ENCODE measurements at regions of chr1 and their contacts with region 1.

Region 1: GRCh38 chr1:204746838-204747442 is 61.4 kb upstream of the LRRN2 start:
- DNase-seq: peak; percentile 56
- ATAC-seq: peak; percentile 78
- H3K4me3 Mint-ChIP-seq: no peak overlapping the region
- H3K27ac Mint-ChIP-seq: no peak overlapping the region
- H3K4me1 Mint-ChIP-seq: no peaks in the 10 kb centered on the region
- H3K27me3 Mint-ChIP-seq: peaks cover 32% of the 10 kb centered on the region

Region 2: DNA sequence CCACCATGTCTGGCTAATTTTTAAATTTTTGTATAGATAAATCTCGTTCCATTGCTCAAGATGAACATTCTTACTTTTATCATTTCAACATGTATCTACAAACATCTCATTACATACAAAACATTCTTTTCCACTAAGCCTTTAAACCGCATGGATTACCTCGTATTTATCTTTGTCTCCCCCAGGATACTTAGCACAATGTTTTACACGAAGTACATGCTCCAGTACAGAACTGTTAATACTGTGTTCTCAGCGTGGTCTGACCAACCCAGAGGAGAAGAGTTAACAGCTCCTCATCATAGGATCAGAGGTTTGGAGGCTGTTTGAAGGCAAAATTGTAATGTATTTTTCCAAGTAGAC is 259.7 kb before region 1 on chr1:
- CTCF ChIA-PET with region 1: no interaction called
- DNase-seq: no peak
- ATAC-seq: no peak
- H3K4me3 Mint-ChIP-seq: no peak overlapping the region
- H3K27ac Mint-ChIP-seq: no peak overlapping the region
- H3K4me1 Mint-ChIP-seq: peaks cover 21% of the 10 kb centered on the region
- H3K27me3 Mint-ChIP-seq: no peaks in the 10 kb centered on the region

Region 3: GRCh38 chr1:204791453-204792353 is 44.8 kb after region 1 on chr1:
- CTCF ChIA-PET with region 1: interaction called, 11 read pairs
- DNase-seq: peak; percentile 85
- ATAC-seq: peak; percentile 67
- H3K4me3 Mint-ChIP-seq: no peak overlapping the region
- H3K27ac Mint-ChIP-seq: no peak overlapping the region
- H3K4me1 Mint-ChIP-seq: no peaks in the 10 kb centered on the region
- H3K27me3 Mint-ChIP-seq: peaks cover 42% of the 10 kb centered on the region

Region 4: GRCh38 chr1:205032508-205032907 is 285.6 kb after region 1 on chr1:
- CTCF ChIA-PET with region 1: no interaction called
- DNase-seq: no peak
- ATAC-seq: no peak
- H3K4me3 Mint-ChIP-seq: no peak overlapping the region
- H3K27ac Mint-ChIP-seq: no peak overlapping the region
- H3K4me1 Mint-ChIP-seq: no peaks in the 10 kb centered on the region
- H3K27me3 Mint-ChIP-seq: no peaks in the 10 kb centered on the region

Region 5: GRCh38 chr1:205077158-205077933 is 330.4 kb after region 1 on chr1:
- CTCF ChIA-PET with region 1: no interaction called
- DNase-seq: no peak
- ATAC-seq: no peak
- H3K4me3 Mint-ChIP-seq: no peak overlapping the region
- H3K27ac Mint-ChIP-seq: no peak overlapping the region
- H3K4me1 Mint-ChIP-seq: no peaks in the 10 kb centered on the region
- H3K27me3 Mint-ChIP-seq: no peaks in the 10 kb centered on the region